ENCODE measurements at regions of chr1 and their contacts with region 1.

Region 1: DNA sequence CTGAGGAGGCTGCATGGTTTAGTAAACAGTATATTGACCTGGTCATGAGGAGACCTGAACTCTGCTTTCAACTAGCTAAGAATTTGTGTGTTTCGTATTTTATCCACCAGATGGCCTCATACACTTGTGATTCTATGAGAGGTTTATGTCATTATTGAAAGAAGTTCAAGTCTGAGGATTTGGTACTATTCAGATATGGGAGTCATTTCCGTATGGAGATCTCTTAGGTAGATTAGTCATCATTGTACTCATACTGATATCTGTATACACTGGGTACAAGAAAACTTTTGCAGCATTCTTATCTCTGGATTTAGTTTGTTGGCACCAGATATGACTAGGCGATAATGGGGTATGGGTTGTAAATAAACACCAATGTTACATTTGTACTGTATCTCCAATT is 26.6 kb downstream of the ATF6 start:
- DNase-seq: peak; percentile 88
- H3K4me3 ChIP-seq: no peak overlapping the region
- H3K27ac ChIP-seq: peak overlapping the region; percentile 2
- H3K4me1 ChIP-seq: peaks cover 14% of the 10 kb centered on the region
- H3K27me3 ChIP-seq: no peaks in the 10 kb centered on the region
- CTCF ChIP-seq: peak; percentile 26 to 39
- POLR2A ChIP-seq: peak; percentile 60

Region 2: DNA sequence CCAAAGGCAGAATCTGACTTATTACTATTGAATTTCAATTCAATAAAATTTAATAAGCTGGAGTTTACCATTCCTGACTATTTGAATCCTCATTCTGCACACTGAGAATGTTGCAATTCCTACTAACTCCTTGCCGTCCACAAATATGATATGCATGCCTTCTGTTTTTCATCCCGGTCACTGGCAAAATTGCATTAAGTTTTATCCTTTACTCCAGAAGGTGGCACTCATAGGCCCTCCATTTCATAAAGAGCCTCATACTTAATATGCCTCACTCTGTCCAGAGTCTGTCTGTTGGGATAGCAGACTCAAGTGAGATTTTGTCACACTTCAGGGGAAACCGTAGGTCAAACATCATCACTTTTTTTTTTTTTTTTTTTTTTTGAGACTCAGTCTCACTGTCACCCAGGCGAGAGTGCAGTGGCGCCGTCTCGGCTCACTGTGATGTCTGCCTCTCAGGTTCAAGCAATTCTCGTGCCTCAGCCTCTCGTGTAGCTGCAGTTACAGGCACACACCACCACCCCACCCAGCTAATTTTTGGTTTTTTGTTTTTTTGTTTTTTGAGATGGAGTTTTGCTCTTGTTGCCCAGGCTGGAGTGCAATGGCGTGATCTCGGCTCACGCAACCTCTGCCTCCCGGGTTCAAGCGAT is 799.1 kb before region 1 on chr1:
- CTCF ChIA-PET with region 1: no interaction called
- POLR2A ChIA-PET with region 1: no interaction called
- dilution Hi-C with region 1: no loop called
- intact Hi-C with region 1: no loop called
- DNase-seq: peak; percentile 58
- H3K4me3 ChIP-seq: no peak overlapping the region
- H3K27ac ChIP-seq: no peak overlapping the region
- H3K4me1 ChIP-seq: peaks cover 31% of the 10 kb centered on the region
- H3K27me3 ChIP-seq: no peaks in the 10 kb centered on the region
- CTCF ChIP-seq: peak; percentile 10 to 27
- POLR2A ChIP-seq: no peak

Region 3: GRCh38 chr1:161781995-161782394 is 10.7 kb before region 1 on chr1:
- CTCF ChIA-PET with region 1: interaction called, 11 read pairs
- POLR2A ChIA-PET with region 1: no interaction called
- dilution Hi-C with region 1: no loop called
- intact Hi-C with region 1: no loop called
- DNase-seq: no peak
- H3K4me3 ChIP-seq: no peak overlapping the region
- H3K27ac ChIP-seq: no peak overlapping the region
- H3K4me1 ChIP-seq: no peaks in the 10 kb centered on the region
- H3K27me3 ChIP-seq: no peaks in the 10 kb centered on the region
- CTCF ChIP-seq: no peak
- POLR2A ChIP-seq: no peak

Region 4: GRCh38 chr1:161915051-161915503 is 122.3 kb after region 1 on chr1:
- CTCF ChIA-PET with region 1: interaction called, 5 read pairs
- POLR2A ChIA-PET with region 1: no interaction called
- dilution Hi-C with region 1: no loop called
- intact Hi-C with region 1: loop called (anchors 2 kb)
- DNase-seq: no peak
- H3K4me3 ChIP-seq: no peak overlapping the region
- H3K27ac ChIP-seq: no peak overlapping the region
- H3K4me1 ChIP-seq: peaks cover 10% of the 10 kb centered on the region
- H3K27me3 ChIP-seq: no peaks in the 10 kb centered on the region
- CTCF ChIP-seq: no peak
- POLR2A ChIP-seq: no peak

Region 5: GRCh38 chr1:161970633-161971032 is 177.9 kb after region 1 on chr1:
- CTCF ChIA-PET with region 1: no interaction called
- POLR2A ChIA-PET with region 1: no interaction called
- dilution Hi-C with region 1: no loop called
- intact Hi-C with region 1: no loop called
- DNase-seq: no peak
- H3K4me3 ChIP-seq: no peak overlapping the region
- H3K27ac ChIP-seq: no peak overlapping the region
- H3K4me1 ChIP-seq: no peaks in the 10 kb centered on the region
- H3K27me3 ChIP-seq: peaks cover 0 to 2% of the 10 kb centered on the region in 2 experiments
- CTCF ChIP-seq: no peak
- POLR2A ChIP-seq: no peak

Region 6: DNA sequence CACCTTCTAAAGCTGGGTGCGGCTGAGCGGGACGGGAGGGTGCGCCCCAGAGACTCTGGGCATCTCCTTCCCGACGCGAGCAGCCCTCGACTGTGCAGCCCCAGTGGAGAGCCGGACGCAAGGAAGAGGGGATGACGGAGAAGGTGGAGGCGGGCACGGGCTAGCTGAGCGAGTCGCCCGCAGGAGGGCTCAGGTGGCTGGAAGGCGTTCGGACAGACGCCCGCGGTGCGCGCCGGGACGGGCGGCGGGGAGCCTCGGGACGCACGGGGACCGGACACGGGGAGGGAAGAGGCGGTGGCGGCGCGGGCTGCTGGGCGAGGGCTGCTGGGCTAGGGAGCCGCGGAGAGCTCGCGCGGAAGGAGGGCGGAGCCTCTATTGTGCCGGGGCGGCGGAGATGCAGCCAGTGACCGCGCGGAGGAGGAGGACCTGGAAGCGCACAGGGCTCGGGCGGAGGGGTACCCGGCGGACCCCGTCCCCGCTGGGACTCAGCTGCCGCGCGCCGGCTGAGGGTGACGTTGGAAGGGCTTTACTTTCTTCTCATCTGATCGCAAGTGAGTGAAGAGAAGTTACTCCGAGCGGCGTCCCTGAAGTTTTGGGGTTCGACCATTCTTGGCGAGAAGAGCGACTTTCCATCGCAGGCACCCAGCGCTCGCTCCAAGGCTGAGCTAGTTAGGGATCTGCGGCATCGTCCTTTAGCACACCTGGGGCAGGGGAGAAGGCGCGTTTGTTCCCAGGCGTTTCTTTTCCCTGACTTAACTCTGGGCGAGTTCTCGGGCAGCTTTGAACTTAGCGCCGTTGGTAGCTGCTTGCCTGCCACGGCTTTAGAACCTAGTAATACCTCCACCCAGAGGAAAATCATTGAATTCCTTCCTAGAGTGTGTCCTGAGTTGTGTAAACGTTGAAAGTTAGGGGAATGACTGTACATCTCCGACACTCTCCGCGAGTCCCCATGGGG is 231.1 kb after region 1 on chr1 and contains the start of gene OLFML2B:
- CTCF ChIA-PET with region 1: interaction called, 73 read pairs
- POLR2A ChIA-PET with region 1: interaction called, 5 read pairs
- dilution Hi-C with region 1: no loop called
- intact Hi-C with region 1: loop called (anchors 1 kb)
- DNase-seq: peak; percentile 70
- H3K4me3 ChIP-seq: peak within 1 kb of the TSS; percentile 9 to 55 (median 45)
- H3K27ac ChIP-seq: no peak within 1 kb of the TSS
- H3K4me1 ChIP-seq: peaks cover 8% of the 10 kb centered on the region
- H3K27me3 ChIP-seq: peaks cover 0 to 3% of the 10 kb centered on the region in 2 experiments
- CTCF ChIP-seq: peak; percentile 19 to 31
- POLR2A ChIP-seq: no peak
- total RNA-seq, gene OLFML2B: 0.51 and 0.62 TPM in 2 replicates

Region 7: DNA sequence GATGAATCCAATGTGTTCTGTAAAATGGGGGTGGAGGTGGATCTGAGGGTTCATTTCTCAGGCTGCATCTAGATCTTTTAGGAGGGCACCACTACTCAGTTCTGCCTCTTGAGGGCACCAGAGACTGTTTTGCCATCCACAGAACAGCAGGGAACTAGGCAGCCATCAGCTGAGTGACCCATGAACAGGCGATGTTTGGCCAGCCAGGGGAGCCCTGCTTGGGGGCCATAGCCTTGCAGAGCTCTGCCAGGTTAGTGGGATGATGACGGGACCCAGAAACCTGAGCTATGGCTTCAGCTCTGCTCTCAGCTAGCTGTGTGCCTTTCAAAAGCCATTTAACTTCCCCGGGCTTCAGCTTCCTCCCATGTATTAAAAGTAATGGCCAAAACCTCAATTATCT is 263.3 kb after region 1 on chr1:
- CTCF ChIA-PET with region 1: interaction called, 10 read pairs
- POLR2A ChIA-PET with region 1: no interaction called
- dilution Hi-C with region 1: no loop called
- intact Hi-C with region 1: no loop called
- DNase-seq: peak; percentile 83
- H3K4me3 ChIP-seq: no peak overlapping the region
- H3K27ac ChIP-seq: no peak overlapping the region
- H3K4me1 ChIP-seq: peaks cover 13% of the 10 kb centered on the region
- H3K27me3 ChIP-seq: no peaks in the 10 kb centered on the region
- CTCF ChIP-seq: peak; percentile 86 to 88
- POLR2A ChIP-seq: no peak

Measured in endothelial cell of umbilical vein (primary cell).